AG04449 (cell line): ENCODE measurements at regions of chr4 and their contacts with region 1.

Region 1: DNA sequence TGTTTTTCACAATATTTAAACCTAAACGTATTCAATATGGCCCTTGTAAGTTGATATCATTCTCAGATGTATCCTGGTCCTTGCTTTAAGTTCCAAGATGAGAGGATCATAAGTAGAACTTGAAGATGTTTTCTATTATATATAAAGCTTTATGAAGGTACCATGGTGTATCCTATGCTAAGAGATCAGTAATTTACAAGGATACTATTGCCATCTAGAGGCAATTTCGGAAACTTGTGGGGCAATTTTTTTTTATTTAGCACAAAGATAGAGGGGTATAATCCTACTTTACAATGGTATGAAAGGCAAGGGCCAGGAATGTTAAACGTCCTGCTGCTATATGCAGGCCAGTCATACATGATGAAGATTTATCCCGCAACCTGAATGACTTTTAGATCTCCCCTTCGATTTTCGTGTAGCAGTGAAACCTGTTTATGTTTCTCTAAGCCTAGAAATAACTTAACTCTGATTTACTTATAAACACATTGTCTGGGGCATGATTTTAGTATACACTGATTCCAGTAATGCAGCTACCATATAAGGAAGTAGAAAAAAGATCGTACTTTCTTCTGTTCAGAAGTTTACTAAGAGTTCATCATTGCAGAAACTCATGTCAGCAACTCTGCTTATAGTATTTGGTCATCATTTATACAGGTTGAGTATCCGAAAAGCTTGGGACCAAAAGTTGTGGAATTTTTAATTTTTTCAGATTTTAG is 2.6 kb downstream of the SLC25A31 start:
- DNase-seq: peak; percentile 4
- H3K4me3 ChIP-seq: no peak overlapping the region
- CTCF ChIP-seq: peak; percentile 17

Region 2: GRCh38 chr4:127120441-127121090 is 612.2 kb before region 1 on chr4:
- CTCF ChIA-PET with region 1: no interaction called
- POLR2A ChIA-PET with region 1: no interaction called
- DNase-seq: no peak
- H3K4me3 ChIP-seq: no peak overlapping the region
- CTCF ChIP-seq: no peak

Region 3: DNA sequence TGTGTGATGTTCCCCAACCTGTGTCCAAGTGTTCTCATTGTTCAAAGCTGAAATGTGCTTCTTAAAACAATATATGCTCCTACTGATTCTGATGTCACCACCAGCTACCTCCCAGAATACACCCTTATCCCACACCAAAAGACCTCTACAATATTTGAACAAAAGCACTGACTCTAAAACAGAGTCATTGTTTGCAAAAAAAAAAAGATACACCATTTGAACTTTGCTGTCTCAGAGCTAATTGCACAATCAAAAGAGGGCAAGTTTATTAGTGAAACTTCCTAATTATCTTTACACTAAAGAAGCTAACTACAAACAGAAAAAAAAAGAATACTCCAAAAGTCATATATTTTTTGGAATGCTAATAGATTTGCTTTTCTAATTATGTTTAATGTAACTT is 134.1 kb before region 1 on chr4:
- CTCF ChIA-PET with region 1: interaction called, 485 read pairs
- POLR2A ChIA-PET with region 1: no interaction called
- DNase-seq: no peak
- H3K4me3 ChIP-seq: no peak overlapping the region
- CTCF ChIP-seq: no peak

Region 4: GRCh38 chr4:127604949-127605709 is 127.6 kb before region 1 on chr4:
- CTCF ChIA-PET with region 1: interaction called, 485 read pairs
- POLR2A ChIA-PET with region 1: no interaction called
- DNase-seq: no peak
- H3K4me3 ChIP-seq: no peak overlapping the region
- CTCF ChIP-seq: peak; percentile 12

Region 5: GRCh38 chr4:127616898-127617297 is 115.9 kb before region 1 on chr4:
- CTCF ChIA-PET with region 1: interaction called, 20 read pairs
- POLR2A ChIA-PET with region 1: no interaction called
- DNase-seq: no peak
- H3K4me3 ChIP-seq: no peak overlapping the region
- CTCF ChIP-seq: no peak

Region 6: GRCh38 chr4:127622921-127623656 is 109.7 kb before region 1 on chr4:
- CTCF ChIA-PET with region 1: interaction called, 20 read pairs
- POLR2A ChIA-PET with region 1: no interaction called
- DNase-seq: no peak
- H3K4me3 ChIP-seq: peak overlapping the region; percentile 71
- CTCF ChIP-seq: peak; percentile 60

Region 7: DNA sequence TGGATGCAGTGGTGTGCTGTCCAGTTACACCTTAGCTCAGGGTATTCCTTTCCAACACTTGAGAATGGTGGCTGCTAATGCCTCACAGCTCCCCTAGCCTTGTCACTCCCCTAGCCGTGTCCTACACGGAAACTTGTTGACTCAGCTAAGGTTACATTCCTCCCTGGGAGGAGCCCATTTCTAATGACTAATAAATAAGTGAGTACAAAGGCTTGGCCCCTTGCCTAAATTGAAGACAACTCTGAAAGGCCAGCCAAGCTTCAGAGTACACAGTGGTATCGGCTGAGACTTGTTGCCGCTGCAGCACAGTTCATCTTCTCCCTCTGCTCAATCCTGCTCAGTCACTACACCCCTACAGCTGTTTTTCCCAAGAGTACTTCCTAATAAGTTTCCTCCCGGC is 23.8 kb before region 1 on chr4:
- CTCF ChIA-PET with region 1: interaction called, 11 read pairs
- POLR2A ChIA-PET with region 1: no interaction called
- DNase-seq: no peak
- H3K4me3 ChIP-seq: no peak overlapping the region
- CTCF ChIP-seq: no peak